CD8-positive, alpha-beta memory T cell (primary cell): ENCODE measurements at regions of chr4 and their contacts with region 1.

Region 1: GRCh38 chr4:98928505-98929340 is at the start of gene EIF4E:
- DNase-seq: peak; percentile 95 to 99 (median 98)
- H3K4me3 ChIP-seq: peak within 1 kb of the TSS; percentile 89
- H3K4me3 Mint-ChIP-seq: peak within 1 kb of the TSS; percentile 96 to 99 (median 98)
- H3K27ac ChIP-seq: peak within 1 kb of the TSS; percentile 87
- H3K27ac Mint-ChIP-seq: peak within 1 kb of the TSS; percentile 94 to 98 (median 97)
- H3K4me1 ChIP-seq: peaks cover 17% of the 10 kb centered on the region
- H3K4me1 Mint-ChIP-seq: peaks cover 37 to 54% (median 40%) of the 10 kb centered on the region in 3 donors
- H3K27me3 ChIP-seq: no peaks in the 10 kb centered on the region
- H3K27me3 Mint-ChIP-seq: peaks cover 0 to 5% of the 10 kb centered on the region in 2 donors
- total RNA-seq, gene EIF4E: 157 to 168 TPM

Region 2: DNA sequence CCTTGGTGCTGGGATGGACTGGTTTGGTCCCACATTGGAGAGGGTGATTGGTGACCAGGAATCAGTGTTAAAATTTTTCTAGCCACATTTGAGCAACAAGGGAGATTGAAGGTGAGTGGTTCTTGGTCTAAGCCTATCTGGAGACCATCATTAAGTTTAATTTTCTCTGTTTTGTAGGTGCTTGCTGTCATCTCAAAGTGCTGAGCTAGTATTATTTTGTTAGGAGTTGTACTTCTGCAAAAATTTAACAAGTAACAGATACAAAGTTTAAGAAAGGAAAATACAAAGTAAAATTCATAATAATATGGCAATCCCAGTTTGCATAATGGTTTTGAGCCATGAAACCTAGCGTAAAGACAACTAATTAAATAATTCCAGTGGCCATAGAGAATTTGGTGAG is 601.0 kb before region 1 on chr4:
- CTCF ChIA-PET with region 1: no interaction called
- POLR2A ChIA-PET with region 1: interaction called, 10 read pairs
- DNase-seq: no peak
- H3K4me3 ChIP-seq: no peak overlapping the region
- H3K4me3 Mint-ChIP-seq: no peak overlapping the region
- H3K27ac ChIP-seq: no peak overlapping the region
- H3K27ac Mint-ChIP-seq: peak overlapping the region in 1 of 8 donors; percentile 45
- H3K4me1 ChIP-seq: no peaks in the 10 kb centered on the region
- H3K4me1 Mint-ChIP-seq: peaks cover 0 to 1% (median 0%) of the 10 kb centered on the region in 3 donors
- H3K27me3 ChIP-seq: no peaks in the 10 kb centered on the region
- H3K27me3 Mint-ChIP-seq: no peaks in the 10 kb centered on the region

Region 3: DNA sequence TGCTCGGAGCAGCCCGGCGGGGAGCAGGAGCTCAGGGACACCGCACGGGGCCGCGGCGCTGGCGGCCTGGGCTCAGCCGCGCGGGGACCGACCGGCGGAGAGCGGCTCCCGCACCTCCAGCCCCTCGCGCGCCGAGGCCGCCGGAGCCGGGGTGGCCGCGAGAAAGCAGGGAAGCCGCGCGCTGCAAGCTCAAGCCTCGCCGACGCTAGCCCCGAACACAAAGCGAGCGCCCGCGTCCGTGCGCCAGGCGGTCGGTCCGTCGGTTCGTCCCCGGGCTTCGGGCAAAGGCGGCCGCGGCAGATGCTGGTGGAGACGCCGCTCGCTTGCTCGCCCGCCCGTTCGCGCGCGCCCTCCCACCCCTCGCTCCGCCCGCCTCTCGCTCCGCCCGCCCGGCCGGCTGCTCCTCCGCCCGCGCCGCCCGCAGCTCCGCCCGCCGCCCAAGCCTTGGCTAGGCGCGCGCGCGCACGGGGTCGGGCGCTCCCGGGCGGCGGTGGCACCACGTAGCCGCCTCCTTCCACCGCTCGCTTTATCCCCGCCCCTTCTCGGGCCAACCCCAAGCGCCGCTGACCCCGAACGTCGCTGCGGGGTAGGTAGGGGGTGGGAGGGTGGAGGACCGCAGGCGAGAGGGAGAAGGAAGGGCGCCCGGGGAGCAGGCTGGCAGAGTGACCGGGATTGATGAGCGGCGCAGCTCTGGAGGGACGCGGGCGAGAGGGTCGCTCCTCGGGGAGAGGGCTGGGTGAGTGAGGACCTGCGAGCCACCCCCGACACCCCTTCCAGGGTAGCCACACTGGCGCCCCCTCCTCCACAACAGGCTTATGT is 270.2 kb before region 1 on chr4 and contains the start of gene TSPAN5:
- CTCF ChIA-PET with region 1: interaction called, 5 read pairs
- POLR2A ChIA-PET with region 1: interaction called, 11 read pairs
- DNase-seq: peak; percentile 73 to 83 (median 77)
- H3K4me3 ChIP-seq: peak within 1 kb of the TSS; percentile 96
- H3K4me3 Mint-ChIP-seq: peak within 1 kb of the TSS; percentile 85 to 97 (median 92)
- H3K27ac ChIP-seq: peak within 1 kb of the TSS; percentile 19
- H3K27ac Mint-ChIP-seq: peak within 1 kb of the TSS; percentile 73 to 95 (median 90)
- H3K4me1 ChIP-seq: peaks cover 59% of the 10 kb centered on the region
- H3K4me1 Mint-ChIP-seq: peaks cover 72 to 87% (median 85%) of the 10 kb centered on the region in 3 donors
- H3K27me3 ChIP-seq: no peaks in the 10 kb centered on the region
- H3K27me3 Mint-ChIP-seq: peaks cover 0 to 2% of the 10 kb centered on the region in 2 donors
- total RNA-seq, gene TSPAN5: 15.9 to 16.7 TPM

Region 4: DNA sequence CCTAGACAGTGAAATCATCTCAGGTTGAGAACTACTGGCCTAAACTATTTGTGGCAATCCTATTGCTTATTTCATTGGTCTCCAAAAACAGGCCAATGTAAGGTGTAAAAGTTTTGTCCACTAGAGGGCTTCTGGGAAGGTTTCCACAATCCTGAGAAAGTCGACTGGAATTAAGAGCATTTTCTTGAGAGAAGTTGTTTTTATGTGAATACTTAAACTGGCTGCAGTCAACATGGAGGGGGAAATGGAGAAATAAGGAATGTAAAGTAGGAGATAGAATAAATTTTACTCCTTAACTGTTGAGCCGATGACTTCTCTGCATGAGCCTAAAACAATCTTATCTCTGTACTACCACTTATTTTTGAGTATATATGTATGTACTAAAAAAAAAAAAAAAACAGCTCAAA is 11.2 kb after region 1 on chr4:
- CTCF ChIA-PET with region 1: interaction called, 13 read pairs
- POLR2A ChIA-PET with region 1: no interaction called
- DNase-seq: peak in 2 of 5 donors; percentile 7 to 15
- H3K4me3 ChIP-seq: no peak overlapping the region
- H3K4me3 Mint-ChIP-seq: no peak overlapping the region
- H3K27ac ChIP-seq: no peak overlapping the region
- H3K27ac Mint-ChIP-seq: no peak overlapping the region
- H3K4me1 ChIP-seq: no peaks in the 10 kb centered on the region
- H3K4me1 Mint-ChIP-seq: peaks cover 2 to 4% (median 3%) of the 10 kb centered on the region in 3 donors
- H3K27me3 ChIP-seq: no peaks in the 10 kb centered on the region
- H3K27me3 Mint-ChIP-seq: no peaks in the 10 kb centered on the region

Region 5: DNA sequence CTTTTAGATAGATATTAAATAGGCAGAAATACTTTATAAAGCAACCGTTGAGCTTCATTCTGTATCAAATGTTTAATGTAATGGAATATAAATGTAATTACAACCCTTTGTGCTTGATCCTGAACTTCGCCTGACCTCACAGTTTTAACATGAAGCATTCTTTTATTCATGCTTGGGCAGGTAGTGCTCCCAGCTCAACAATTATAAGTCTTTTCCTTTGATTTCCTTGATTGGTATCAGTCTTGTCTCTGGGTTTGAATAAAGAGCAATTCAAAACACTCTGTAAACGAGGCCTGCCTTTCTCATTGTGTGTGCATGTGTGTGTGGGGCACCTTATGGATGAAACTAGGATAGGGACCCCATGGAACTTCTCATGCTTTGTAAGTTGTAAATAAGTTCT is 73.6 kb after region 1 on chr4:
- CTCF ChIA-PET with region 1: no interaction called
- POLR2A ChIA-PET with region 1: no interaction called
- DNase-seq: no peak
- H3K4me3 ChIP-seq: no peak overlapping the region
- H3K4me3 Mint-ChIP-seq: peak overlapping the region in 1 of 7 donors; percentile 38
- H3K27ac ChIP-seq: no peak overlapping the region
- H3K27ac Mint-ChIP-seq: peak overlapping the region in 3 of 8 donors; percentile 24 to 78 (median 74)
- H3K4me1 ChIP-seq: peaks cover 11% of the 10 kb centered on the region
- H3K4me1 Mint-ChIP-seq: peaks cover 60 to 91% (median 89%) of the 10 kb centered on the region in 3 donors
- H3K27me3 ChIP-seq: no peaks in the 10 kb centered on the region
- H3K27me3 Mint-ChIP-seq: peaks cover 0 to 1% of the 10 kb centered on the region in 2 donors

Region 6: DNA sequence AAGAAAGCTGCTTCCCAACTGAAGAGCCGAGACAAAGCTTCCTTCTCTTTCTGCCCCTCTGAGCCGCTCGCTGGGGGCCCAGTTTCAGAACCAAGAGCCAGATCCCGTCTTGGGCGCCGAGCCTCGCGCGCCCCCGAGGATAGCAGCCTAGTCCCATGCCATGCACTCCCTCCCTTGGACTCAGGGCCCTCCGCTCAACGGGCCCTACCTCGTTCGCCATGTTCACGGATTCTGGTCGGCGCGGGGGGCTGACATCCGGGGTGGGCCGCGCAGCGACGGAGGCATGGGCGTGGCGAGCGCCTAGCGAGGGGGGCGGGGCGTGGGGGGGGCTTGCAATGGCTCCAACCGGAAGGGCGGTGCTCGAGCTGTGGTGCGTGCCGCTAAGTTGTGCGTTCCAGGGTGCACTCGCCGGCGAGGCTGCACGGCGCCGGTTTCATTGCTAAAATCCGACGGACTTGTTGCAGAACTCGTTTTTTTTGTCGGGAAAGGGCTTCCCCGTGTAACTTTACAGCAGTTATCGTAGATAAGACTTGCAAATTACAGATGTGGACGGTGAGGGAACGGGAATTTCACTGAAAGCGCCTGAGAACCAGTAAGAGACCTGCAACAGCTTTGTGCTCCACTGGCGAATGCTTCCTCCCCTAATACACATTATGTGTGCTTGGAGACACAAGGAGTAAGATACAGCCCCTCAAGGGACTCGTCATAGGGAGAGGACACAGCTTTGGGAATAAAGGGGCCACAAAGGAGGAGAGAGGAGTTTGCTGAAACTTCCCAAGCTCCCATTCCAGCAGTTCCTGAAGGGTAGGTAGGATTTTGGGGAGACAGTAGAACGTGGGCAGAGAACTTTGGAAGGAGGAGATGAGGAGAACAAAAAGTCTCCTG is 160.0 kb after region 1 on chr4 and contains the start of gene ADH5:
- CTCF ChIA-PET with region 1: interaction called, 3 read pairs
- POLR2A ChIA-PET with region 1: interaction called, 20 read pairs
- DNase-seq: peak; percentile 83 to 94 (median 85)
- H3K4me3 ChIP-seq: peak within 1 kb of the TSS; percentile 97
- H3K4me3 Mint-ChIP-seq: peak within 1 kb of the TSS; percentile 96 to 99 (median 97)
- H3K27ac ChIP-seq: peak within 1 kb of the TSS; percentile 85
- H3K27ac Mint-ChIP-seq: peak within 1 kb of the TSS; percentile 94 to 99 (median 97)
- H3K4me1 ChIP-seq: peaks cover 15% of the 10 kb centered on the region
- H3K4me1 Mint-ChIP-seq: peaks cover 49 to 64% (median 58%) of the 10 kb centered on the region in 3 donors
- H3K27me3 ChIP-seq: no peaks in the 10 kb centered on the region
- H3K27me3 Mint-ChIP-seq: no peaks in the 10 kb centered on the region
- total RNA-seq, gene ADH5: 113 to 116 TPM